ENCODE measurements at regions of chr2 and their contacts with region 1.

Region 1: DNA sequence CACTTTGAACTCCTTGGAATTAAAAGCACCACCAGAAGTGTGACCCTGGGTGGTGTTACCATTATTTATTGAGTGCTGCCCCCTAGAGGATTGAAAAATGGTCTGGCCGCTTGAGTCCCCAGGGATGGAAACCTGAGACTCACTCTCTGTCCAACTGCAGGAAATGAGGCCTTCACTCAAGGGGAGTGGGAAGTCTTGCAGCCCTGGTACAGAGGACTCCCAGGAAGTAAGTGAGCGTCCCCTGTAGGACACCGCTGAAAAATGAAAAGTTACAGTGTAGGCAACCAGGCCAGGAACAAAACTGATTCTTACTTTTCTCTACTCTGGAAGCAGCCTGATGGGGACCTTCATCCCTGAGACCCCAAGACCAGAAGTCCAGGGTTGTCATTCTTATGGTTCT is 2.2 kb upstream of the NRP2 start:
- DNase-seq: peak; percentile 78
- H3K4me3 ChIP-seq: no peak overlapping the region
- H3K27ac ChIP-seq: no peak overlapping the region
- H3K27me3 ChIP-seq: no peaks in the 10 kb centered on the region
- CTCF ChIP-seq: peak; percentile 71

Region 2: GRCh38 chr2:204691911-204692510 is 988.1 kb before region 1 on chr2:
- CTCF ChIA-PET with region 1: interaction called, 10 read pairs
- POLR2A ChIA-PET with region 1: no interaction called
- DNase-seq: peak; percentile 79
- H3K4me3 ChIP-seq: no peak overlapping the region
- H3K27ac ChIP-seq: no peak overlapping the region
- H3K27me3 ChIP-seq: no peaks in the 10 kb centered on the region
- CTCF ChIP-seq: peak; percentile 87

Region 3: GRCh38 chr2:205323929-205324328 is 356.1 kb before region 1 on chr2:
- CTCF ChIA-PET with region 1: interaction called, 12 read pairs
- POLR2A ChIA-PET with region 1: interaction called, 3 read pairs
- DNase-seq: no peak
- H3K4me3 ChIP-seq: no peak overlapping the region
- H3K27ac ChIP-seq: no peak overlapping the region
- H3K27me3 ChIP-seq: no peaks in the 10 kb centered on the region
- CTCF ChIP-seq: peak; percentile 48

Region 4: DNA sequence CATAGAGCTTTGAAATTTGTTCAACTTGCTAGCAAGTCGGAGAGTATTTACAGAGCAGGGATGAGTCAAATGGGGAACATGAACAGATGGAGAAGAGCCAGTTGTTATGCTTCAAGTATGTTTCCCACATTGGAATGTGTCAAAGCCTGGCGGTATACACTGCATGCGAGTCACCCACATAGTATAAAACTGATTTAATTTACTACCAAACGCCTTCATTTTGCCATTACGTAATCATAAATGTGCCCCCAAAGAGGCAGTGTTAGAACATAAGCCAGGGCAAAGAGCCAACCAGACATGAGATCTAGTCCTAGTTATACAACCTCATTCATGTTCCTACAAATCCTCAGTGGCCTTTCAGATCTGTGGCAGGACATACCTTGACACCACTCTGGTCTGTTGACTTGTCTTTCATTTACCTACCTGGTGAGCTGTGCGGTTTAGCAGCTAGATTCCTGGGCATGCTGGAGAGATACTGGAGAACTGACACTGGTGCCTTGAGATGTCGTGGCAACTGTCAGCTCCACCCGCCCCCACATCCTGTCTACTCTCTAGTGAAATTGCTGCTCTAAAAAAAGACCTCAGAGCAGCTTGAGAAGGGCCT is 19.4 kb before region 1 on chr2:
- CTCF ChIA-PET with region 1: interaction called, 11 read pairs
- POLR2A ChIA-PET with region 1: interaction called, 8 read pairs
- DNase-seq: peak; percentile 91
- H3K4me3 ChIP-seq: no peak overlapping the region
- H3K27ac ChIP-seq: peak overlapping the region; percentile 54
- H3K27me3 ChIP-seq: no peaks in the 10 kb centered on the region
- CTCF ChIP-seq: no peak

Region 5: DNA sequence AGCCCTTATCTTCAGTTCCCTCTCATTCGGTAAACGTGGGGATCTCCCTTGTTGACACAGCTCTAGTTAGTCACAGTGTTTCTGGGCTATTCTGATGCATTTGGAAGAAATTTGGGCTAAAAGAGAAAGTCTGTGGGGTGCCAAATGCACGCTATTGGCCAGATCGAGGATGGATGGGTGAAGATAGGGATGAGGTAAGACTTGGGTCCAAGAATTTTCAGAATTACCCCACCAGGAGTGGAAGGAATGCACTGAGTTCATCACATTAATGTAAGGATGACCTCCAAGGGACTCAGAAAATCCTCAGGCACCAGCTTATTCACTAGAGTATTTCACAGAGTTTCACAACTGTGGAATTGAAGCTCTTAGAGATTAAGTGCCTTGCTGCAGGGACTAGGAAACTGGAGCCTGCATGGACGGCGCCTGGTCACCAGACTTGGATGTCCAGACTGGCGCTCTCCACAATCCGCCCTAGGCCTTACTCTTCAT is 51.6 kb after region 1 on chr2:
- CTCF ChIA-PET with region 1: interaction called, 3 read pairs
- POLR2A ChIA-PET with region 1: interaction called, 26 read pairs
- DNase-seq: peak; percentile 86
- H3K4me3 ChIP-seq: no peak overlapping the region
- H3K27ac ChIP-seq: peak overlapping the region; percentile 89
- H3K27me3 ChIP-seq: no peaks in the 10 kb centered on the region
- CTCF ChIP-seq: no peak

Region 6: GRCh38 chr2:205878999-205879761 is 199.1 kb after region 1 on chr2:
- CTCF ChIA-PET with region 1: no interaction called
- POLR2A ChIA-PET with region 1: no interaction called
- DNase-seq: no peak
- H3K4me3 ChIP-seq: 0 out of 2 replicates have a peak overlapping the region, but pooled peaks have one; percentile 7
- H3K27ac ChIP-seq: no peak overlapping the region
- H3K27me3 ChIP-seq: peaks cover 11% of the 10 kb centered on the region
- CTCF ChIP-seq: no peak

Measured in AG04450 (cell line).